ENCODE measurements at regions of chr10 and their contacts with region 1.

Region 1: DNA sequence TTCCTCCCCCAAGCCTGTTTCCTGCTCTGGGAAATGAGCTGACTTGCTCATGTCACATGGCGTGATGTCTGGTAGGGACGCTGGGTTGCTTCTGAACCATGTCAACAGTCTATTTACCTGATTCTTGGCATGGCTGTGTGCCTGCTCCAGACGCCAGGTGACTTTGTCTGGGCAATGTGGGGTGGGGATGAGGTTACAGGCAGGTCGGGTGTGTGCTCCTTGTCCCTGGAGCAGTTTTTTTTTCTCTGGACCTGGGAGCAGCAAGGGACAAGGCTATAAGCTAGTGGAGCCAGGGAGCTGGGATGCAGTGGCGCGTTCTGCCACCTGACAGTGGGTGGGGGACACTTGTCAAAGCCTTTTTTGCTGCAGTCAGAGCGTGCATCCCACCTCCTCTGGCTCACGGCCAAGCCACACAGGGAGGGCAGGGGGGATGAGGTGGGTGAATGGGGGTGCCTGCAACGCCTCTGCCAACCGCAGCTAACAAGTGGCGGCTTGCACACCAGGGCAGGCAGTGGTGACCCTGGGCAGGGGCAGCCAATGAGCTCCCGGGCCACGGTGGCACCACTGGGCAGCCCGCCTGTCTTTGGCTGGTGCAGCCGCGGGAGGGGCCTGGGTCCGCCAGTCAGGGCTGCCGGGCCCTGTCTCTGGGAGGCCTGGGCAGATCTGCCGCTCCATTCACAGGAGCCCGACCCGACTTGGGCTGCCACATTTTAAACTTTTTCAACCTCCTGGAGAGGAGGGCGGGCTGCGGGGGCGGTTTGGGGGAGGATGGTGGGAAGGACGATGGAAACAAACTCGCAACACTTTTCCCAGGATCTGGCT is 22.9 kb downstream of the DNAJB12 start:
- DNase-seq: peak; percentile 63
- CTCF ChIP-seq: no peak

Region 2: GRCh38 chr10:72133517-72133916 is 198.3 kb before region 1 on chr10:
- CTCF ChIA-PET with region 1: interaction called, 24 read pairs
- POLR2A ChIA-PET with region 1: no interaction called
- DNase-seq: peak; percentile 68
- CTCF ChIP-seq: no peak

Region 3: DNA sequence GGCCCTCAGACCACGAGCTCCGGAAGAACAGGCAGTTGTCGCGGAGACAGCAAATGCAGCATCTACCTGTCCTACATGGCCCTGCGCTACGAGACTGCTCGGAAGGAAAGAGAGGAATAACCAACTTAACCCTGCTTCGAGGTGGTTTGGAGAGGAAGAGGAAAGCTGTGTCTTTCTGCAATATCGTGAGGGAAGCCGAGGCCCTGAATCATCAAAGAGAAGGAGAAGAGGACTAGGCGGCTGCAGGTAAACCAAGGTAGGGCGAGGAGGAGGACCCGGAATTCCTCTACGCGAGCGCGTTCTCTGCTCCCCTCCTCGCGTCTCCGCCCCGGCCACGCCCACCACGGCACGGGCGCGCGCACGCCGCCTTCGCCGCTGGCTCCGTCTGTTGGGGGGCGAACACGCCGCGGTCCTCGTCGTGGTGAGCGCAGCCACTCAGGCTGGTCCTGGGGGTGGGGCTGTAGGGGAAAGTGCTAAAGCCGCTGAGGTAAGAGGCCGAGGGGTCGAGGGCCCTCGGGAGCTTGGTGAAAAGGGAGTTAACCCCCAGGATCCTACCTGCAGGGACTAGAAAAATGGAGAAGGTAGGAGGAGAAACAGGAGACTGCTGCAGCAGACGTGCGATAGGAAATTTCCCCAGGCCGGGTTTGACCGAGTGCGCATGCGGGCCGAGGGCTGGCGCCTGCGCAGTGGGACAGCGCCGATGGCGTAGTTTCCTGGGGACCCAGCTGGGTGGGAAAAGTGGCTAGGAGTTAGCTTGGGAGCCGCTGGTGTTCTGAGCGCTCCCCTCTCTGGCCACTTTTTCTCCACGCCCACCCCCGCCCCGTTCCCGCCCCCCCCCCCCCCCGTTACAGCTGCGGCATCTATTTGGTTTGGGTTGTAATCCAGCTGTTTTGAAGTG is 115.9 kb before region 1 on chr10 and contains the starts of genes ANAPC16 and ASCC1:
- CTCF ChIA-PET with region 1: interaction called, 65 read pairs
- POLR2A ChIA-PET with region 1: no interaction called
- DNase-seq: peak; percentile 91
- CTCF ChIP-seq: no peak

Region 4: DNA sequence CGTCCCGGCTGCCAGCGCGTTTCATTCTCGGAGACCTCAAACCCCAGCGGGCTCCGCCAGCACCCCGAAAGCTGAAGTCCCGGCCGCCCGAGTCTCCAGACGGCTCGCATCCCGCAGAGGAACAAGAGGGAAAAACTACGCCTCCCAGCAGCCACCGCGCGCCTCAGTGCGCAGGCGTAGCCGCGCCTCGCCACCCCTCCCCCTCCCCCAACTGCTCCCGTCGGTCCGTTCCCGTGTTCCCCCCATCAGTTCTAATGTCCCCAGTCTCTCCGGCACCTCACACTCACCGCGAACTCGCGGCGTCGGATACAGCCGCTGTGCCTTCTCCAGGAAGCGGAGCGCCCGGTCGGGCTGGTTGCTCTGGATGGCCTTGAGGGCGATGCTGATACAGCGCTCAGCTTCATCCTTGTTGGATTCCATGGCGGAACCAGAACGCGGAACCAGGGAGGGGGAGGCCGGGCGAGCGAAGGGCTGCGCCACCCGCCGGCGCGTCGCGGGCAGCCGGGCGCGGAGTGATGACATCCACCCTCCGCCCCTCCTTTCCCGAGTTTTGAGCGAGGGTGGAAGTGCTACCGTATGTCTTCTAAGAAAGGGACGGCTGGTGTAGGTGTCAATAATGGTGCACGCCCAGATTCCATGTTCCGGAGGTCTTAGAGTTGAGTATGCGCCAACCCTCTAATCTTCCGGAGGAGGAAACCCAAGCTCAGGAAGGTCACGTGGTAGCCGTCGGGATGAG is 22.8 kb after region 1 on chr10 and contains the start of gene DNAJB12:
- CTCF ChIA-PET with region 1: interaction called, 78 read pairs
- POLR2A ChIA-PET with region 1: no interaction called
- DNase-seq: peak; percentile 94
- CTCF ChIP-seq: no peak

Region 5: DNA sequence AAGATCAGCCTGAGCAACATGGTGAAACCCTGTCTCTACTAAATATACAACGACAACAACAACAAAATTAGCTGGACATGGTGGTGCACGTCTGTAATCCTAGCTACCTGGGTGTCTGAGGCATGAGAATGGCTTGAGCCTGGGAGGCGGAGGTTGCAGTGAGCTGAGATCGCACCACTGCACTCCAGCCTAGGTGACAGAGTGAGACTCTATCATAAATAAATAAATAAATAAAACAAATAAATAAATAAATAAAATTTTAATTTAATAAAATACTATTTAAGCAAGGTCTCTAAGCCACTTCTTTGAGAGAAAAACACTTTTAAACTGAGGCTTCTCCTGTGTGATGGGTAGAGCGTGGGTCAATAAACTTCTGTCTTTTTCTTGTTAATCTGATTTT is 255.8 kb after region 1 on chr10:
- CTCF ChIA-PET with region 1: no interaction called
- POLR2A ChIA-PET with region 1: no interaction called
- DNase-seq: no peak
- CTCF ChIP-seq: no peak

Region 6: GRCh38 chr10:72753760-72754231 is 422.0 kb after region 1 on chr10:
- CTCF ChIA-PET with region 1: no interaction called
- POLR2A ChIA-PET with region 1: no interaction called
- DNase-seq: no peak
- CTCF ChIP-seq: no peak

Measured in GM10248 (cell line).